ENCODE measurements at regions of chr14 and their contacts with region 1.

Region 1: GRCh38 chr14:94136575-94137331 is 7.3 kb upstream of the IFI27L2 start:
- DNase-seq: peak; percentile 81 to 91 (median 86)
- ATAC-seq: peak; percentile 61 to 95 (median 94)
- H3K4me3 ChIP-seq: no peak overlapping the region
- H3K27ac ChIP-seq: no peak overlapping the region
- H3K4me1 ChIP-seq: no peaks in the 10 kb centered on the region
- H3K27me3 ChIP-seq: no peaks in the 10 kb centered on the region
- CTCF ChIP-seq: peak; percentile 89 to 99 (median 96)
- POLR2A ChIP-seq: no peak

Region 2: DNA sequence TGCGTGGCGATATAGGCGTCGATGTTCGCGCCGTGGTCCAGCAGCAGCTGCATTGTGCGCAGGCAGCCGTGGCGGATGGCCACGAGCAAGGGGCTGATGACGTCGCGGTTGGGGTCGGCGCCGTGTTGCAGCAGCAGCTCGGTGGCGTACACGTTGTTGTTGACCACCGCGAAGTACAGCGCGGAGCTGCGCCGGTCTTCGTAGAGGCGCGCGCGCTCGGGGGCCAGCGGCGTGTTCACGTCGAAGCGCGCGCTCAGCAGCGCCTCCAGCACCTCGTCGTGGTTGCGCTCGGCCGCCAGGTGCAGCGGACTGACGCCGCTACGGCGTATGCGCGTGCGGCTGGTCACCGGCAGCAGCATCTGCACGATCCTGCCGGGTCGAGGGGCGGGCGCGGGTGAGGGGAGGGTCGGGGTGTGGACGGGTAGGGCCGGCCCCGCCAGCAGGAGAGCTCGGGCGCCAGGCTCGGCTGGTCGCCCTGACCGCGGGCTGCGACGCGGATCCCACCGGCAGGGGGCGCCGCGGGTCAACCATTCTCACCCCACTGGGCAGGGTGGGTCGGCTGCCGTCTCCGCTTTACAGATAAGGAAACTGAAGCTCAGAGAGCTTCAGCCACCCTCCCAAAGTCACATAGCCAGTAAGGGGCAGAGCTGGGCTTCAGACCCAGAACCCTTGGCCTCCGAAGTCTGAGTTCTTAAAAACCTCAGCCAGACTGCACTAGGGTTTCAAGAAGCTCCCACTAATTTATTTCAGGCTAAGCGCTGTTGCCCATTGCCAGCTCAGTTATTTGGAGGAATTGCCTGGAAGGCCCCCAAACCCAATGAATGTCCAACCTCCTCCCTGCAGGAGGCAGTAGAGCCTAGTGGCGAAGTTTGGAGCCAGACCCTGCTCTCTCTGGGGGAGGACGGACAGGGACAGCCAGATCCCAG is 197.2 kb before region 1 on chr14:
- intact Hi-C with region 1: loop called in 2 of 10 experiments (anchors 5 to 10 kb)
- DNase-seq: peak; percentile 73 to 92 (median 79)
- ATAC-seq: peak; percentile 54 to 80 (median 72)
- H3K4me3 ChIP-seq: peak overlapping the region in 9 of 12 donors; percentile 15 to 50 (median 25)
- H3K27ac ChIP-seq: peak overlapping the region in 3 of 12 donors; percentile 24 to 75 (median 37)
- H3K4me1 ChIP-seq: peaks cover 0 to 20% (median 4%) of the 10 kb centered on the region in 12 donors
- H3K27me3 ChIP-seq: peaks cover 0 to 18% (median 7%) of the 10 kb centered on the region in 9 donors
- CTCF ChIP-seq: peak; percentile 75 to 93 (median 82)
- POLR2A ChIP-seq: no peak

Region 3: GRCh38 chr14:94036313-94037050 is 100.3 kb before region 1 on chr14:
- intact Hi-C with region 1: loop called (anchors 1 to 2 kb)
- DNase-seq: peak; percentile 62 to 77 (median 72)
- ATAC-seq: peak; percentile 78 to 92 (median 84)
- H3K4me3 ChIP-seq: no peak overlapping the region
- H3K27ac ChIP-seq: no peak overlapping the region
- H3K4me1 ChIP-seq: peaks cover 0 to 16% (median under 1%) of the 10 kb centered on the region in 12 donors
- H3K27me3 ChIP-seq: no peaks in the 10 kb centered on the region
- CTCF ChIP-seq: peak; percentile 76 to 90 (median 86)
- POLR2A ChIP-seq: no peak

Region 4: GRCh38 chr14:94175011-94175745 is 38.4 kb after region 1 on chr14:
- intact Hi-C with region 1: loop called in 7 of 10 experiments (anchors 5 kb)
- DNase-seq: peak in 2 of 5 donors; percentile 14 to 28
- ATAC-seq: peak in 1 of 4 donors; percentile 3
- H3K4me3 ChIP-seq: peak overlapping the region in 9 of 12 donors; percentile 43 to 82 (median 66)
- H3K27ac ChIP-seq: no peak overlapping the region
- H3K4me1 ChIP-seq: peaks cover 0 to 23% (median 14%) of the 10 kb centered on the region in 12 donors
- H3K27me3 ChIP-seq: peaks cover 0 to 58% (median 14%) of the 10 kb centered on the region in 9 donors
- CTCF ChIP-seq: no peak
- POLR2A ChIP-seq: no peak

Region 5: GRCh38 chr14:94193776-94194175 is 57.0 kb after region 1 on chr14:
- intact Hi-C with region 1: no loop called
- DNase-seq: no peak
- ATAC-seq: no peak
- H3K4me3 ChIP-seq: no peak overlapping the region
- H3K27ac ChIP-seq: no peak overlapping the region
- H3K4me1 ChIP-seq: no peaks in the 10 kb centered on the region
- H3K27me3 ChIP-seq: peaks cover 0 to 34% (median 0%) of the 10 kb centered on the region in 9 donors
- CTCF ChIP-seq: no peak
- POLR2A ChIP-seq: no peak

Region 6: DNA sequence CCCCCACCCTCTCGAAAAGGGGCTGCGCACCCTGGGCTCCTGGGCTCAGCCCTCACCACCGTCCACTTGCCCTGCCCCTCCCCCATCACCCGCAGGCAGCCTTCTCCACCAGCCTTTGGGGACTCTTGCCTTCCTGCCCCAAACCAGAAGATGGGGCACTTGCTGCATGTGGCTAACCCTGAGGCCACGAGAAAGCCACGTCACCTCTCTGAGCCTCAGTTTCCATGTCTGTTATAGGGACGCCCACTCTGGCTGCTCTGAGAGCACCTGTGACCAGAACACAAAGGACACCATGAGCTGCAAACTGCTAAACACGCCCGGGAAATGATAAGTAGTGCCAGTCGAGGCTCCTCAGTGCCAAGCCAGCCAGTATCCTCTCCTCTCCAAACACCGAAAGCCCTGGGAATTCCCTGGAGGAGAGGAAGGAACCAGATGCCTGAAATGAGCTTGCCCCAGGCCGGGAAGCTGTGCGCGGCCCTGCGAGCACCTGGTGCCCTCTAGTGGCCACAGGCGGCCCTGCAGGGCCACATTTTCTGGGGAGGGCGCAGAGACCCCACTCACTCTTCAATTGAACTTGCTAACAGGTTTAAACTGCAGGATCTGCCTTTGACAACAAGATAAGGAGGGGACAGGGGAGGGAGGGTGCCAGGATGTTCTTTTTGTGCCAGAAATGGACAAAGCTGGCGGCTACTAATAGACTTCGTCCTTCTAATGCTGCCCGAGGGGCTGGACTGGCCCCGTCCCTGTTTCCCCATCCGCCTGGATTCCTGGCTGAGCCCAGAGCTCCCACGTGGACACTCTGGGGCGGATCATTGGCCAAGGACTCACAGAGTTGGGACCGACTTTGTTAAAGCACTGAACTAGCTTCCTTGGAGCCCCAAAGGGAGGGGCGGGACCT is 349.4 kb after region 1 on chr14:
- intact Hi-C with region 1: loop called in 3 of 10 experiments (anchors 5 to 10 kb)
- DNase-seq: peak in 4 of 5 donors; percentile 19 to 52 (median 40)
- ATAC-seq: peak; percentile 20 to 77 (median 72)
- H3K4me3 ChIP-seq: no peak overlapping the region
- H3K27ac ChIP-seq: no peak overlapping the region
- H3K4me1 ChIP-seq: peaks cover 0 to 9% (median 6%) of the 10 kb centered on the region in 12 donors
- H3K27me3 ChIP-seq: peaks cover 0 to 36% (median 12%) of the 10 kb centered on the region in 9 donors
- CTCF ChIP-seq: peak; percentile 94 to 100 (median 98)
- POLR2A ChIP-seq: no peak

Measured in heart left ventricle (tissue), 16 donors.